ENCODE measurements at regions of chr3 and their contacts with region 1.

Region 1: GRCh38 chr3:152466784-152467183 is 198.1 kb downstream of the MBNL1 start:
- DNase-seq: no peak
- ATAC-seq: peak; percentile 83
- H3K4me3 ChIP-seq: no peak overlapping the region
- H3K27ac ChIP-seq: no peak overlapping the region
- H3K4me1 ChIP-seq: no peaks in the 10 kb centered on the region
- H3K27me3 ChIP-seq: no peaks in the 10 kb centered on the region
- CTCF ChIP-seq: peak; percentile 41 to 47 (median 46); a peak in 4 of 6 replicates
- EP300 ChIP-seq: no peak
- POLR2A ChIP-seq: no peak
- RAD21 ChIP-seq: peak; percentile 42

Region 2: DNA sequence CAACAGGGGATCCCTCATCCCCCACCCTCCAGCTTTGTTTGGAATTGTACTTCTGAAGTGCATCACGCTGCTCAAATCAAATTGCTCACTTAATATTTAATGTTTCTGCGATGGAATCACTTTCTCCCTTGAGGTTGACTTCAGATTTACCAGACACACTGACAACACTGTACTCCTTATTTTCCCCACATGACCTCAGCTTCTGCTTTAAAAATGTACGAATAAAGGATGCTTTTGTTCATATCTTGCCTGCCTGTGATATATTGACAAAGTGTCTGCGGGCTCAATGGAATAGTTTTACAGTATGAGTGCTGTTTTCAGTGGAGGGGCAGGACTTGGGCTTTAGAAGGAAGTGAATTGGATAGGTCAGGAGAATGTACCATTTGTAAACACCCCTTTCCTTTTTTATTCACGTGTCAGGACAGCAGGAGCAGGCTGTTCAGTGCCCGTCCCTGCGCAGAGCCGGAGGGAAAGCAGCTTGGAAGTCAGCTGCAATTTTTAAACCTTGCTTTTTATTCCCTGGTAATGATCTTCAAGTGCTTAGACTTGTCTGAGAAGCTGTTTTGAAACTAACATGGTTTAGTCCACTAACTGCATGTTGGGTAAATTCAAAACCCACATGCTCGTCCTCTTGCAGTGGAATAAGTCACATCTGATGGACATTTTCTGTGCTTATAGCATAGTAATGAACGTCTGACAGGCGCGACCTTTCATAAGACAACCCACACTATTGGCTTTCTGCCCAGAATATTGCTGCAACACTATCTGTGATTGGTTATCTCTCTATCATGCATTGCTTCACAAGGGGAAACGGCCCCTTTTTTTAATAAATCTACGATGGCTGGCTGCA is 168.2 kb before region 1 on chr3:
- CTCF ChIA-PET with region 1: no interaction called
- POLR2A ChIA-PET with region 1: no interaction called
- RAD21 ChIA-PET with region 1: no interaction called
- SMC1A ChIA-PET with region 1: no interaction called
- in situ Hi-C with region 1: no loop called
- intact Hi-C with region 1: no loop called
- DNase-seq: peak; percentile 74
- ATAC-seq: peak; percentile 71
- H3K4me3 ChIP-seq: peak overlapping the region; percentile 8
- H3K27ac ChIP-seq: peak overlapping the region; percentile 56
- H3K4me1 ChIP-seq: peaks cover 40% of the 10 kb centered on the region
- H3K27me3 ChIP-seq: no peaks in the 10 kb centered on the region
- CTCF ChIP-seq: no peak
- EP300 ChIP-seq: no peak
- POLR2A ChIP-seq: no peak
- RAD21 ChIP-seq: no peak

Region 3: GRCh38 chr3:152519376-152519775 is 52.6 kb after region 1 on chr3:
- CTCF ChIA-PET with region 1: interaction called, 94 read pairs
- POLR2A ChIA-PET with region 1: no interaction called
- RAD21 ChIA-PET with region 1: interaction called, 46 read pairs
- SMC1A ChIA-PET with region 1: interaction called, 67 read pairs
- in situ Hi-C with region 1: loop called (anchors 10 kb)
- intact Hi-C with region 1: no loop called
- DNase-seq: no peak
- ATAC-seq: peak; percentile 72
- H3K4me3 ChIP-seq: no peak overlapping the region
- H3K27ac ChIP-seq: no peak overlapping the region
- H3K4me1 ChIP-seq: peaks cover 5% of the 10 kb centered on the region
- H3K27me3 ChIP-seq: no peaks in the 10 kb centered on the region
- CTCF ChIP-seq: no peak
- EP300 ChIP-seq: no peak; a peak in 1 of 4 replicates
- POLR2A ChIP-seq: no peak
- RAD21 ChIP-seq: no peak

Region 4: DNA sequence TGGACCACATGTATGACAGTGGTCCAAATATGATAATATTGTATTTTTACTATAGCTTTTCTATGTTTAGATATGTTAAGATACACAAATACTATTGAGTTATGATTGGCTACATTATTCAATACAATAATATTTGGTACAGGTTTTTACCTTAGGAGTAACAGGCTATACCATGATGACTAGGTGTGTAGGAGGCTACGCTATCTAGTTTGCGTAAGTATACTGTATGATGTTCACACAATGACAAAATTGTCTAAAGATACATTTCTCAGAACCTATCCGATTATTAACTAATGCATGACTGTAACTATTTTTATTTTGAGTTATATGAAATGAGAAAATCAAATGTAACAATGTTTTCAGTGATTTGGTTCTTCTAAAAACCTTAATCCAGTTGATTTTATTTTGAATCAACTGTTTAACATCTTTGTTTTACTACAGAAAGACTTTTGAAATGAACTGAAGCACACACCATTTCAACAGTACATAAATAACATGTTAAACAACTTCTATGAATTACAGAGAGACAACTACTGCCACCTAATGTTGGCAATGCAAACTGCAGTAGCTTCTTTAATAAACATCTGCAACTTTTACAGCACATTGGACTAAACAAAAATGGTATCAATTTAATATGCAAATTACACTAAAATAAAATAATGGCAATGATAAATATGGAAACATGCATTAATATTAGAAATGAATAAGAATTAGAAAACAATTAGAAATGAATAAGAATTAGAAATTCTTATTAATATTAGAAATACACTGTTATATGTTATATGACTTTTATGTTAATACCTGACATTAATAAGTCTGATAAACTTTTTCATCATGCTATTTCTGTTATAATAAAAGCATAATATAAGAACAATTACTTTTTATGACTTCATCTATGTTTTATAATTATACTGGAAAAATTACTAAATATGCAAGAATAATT is 57.7 kb after region 1 on chr3:
- CTCF ChIA-PET with region 1: interaction called, 94 read pairs
- POLR2A ChIA-PET with region 1: no interaction called
- RAD21 ChIA-PET with region 1: interaction called, 46 read pairs
- SMC1A ChIA-PET with region 1: interaction called, 67 read pairs
- in situ Hi-C with region 1: loop called (anchors 10 kb)
- intact Hi-C with region 1: no loop called
- DNase-seq: no peak
- ATAC-seq: peak; percentile 74
- H3K4me3 ChIP-seq: no peak overlapping the region
- H3K27ac ChIP-seq: no peak overlapping the region
- H3K4me1 ChIP-seq: no peaks in the 10 kb centered on the region
- H3K27me3 ChIP-seq: no peaks in the 10 kb centered on the region
- CTCF ChIP-seq: peak; percentile 69 to 80 (median 79); a peak in 5 of 6 replicates
- EP300 ChIP-seq: no peak
- POLR2A ChIP-seq: no peak
- RAD21 ChIP-seq: peak; percentile 90